HCT116 (cell line): ENCODE measurements at regions of chr19 and their contacts with region 1.

Region 1: GRCh38 chr19:8355631-8356402 is 8.1 kb upstream of the ANGPTL4 start:
- DNase-seq: peak; percentile 70
- ATAC-seq: peak; percentile 73
- H3K4me3 ChIP-seq: peak overlapping the region in 1 of 2 experiments; percentile 6; a peak in 2 of 4 replicates
- H3K27ac ChIP-seq: peak overlapping the region; percentile 34
- H3K4me1 ChIP-seq: peaks cover 32 to 62% of the 10 kb centered on the region in 2 experiments
- H3K27me3 ChIP-seq: no peaks in the 10 kb centered on the region
- CTCF ChIP-seq: no peak
- POLR2A ChIP-seq: no peak
- RAD21 ChIP-seq: peak; percentile 54

Region 2: GRCh38 chr19:8342684-8343482 is 12.9 kb before region 1 on chr19 and contains the start of gene KANK3:
- CTCF ChIA-PET with region 1: interaction called, 14 read pairs
- POLR2A ChIA-PET with region 1: interaction called, 6 read pairs
- RAD21 ChIA-PET with region 1: no interaction called
- intact Hi-C with region 1: no loop called
- DNase-seq: peak; percentile 97
- ATAC-seq: peak; percentile 100
- H3K4me3 ChIP-seq: peak within 1 kb of the TSS; percentile 59 to 63
- H3K27ac ChIP-seq: peak within 1 kb of the TSS; percentile 68; the same call in 1 of the 2 replicates
- H3K4me1 ChIP-seq: peaks cover 15 to 20% of the 10 kb centered on the region in 2 experiments
- H3K27me3 ChIP-seq: no peaks in the 10 kb centered on the region
- CTCF ChIP-seq: no peak
- POLR2A ChIP-seq: no peak
- RAD21 ChIP-seq: no peak
- total RNA-seq, gene KANK3: 21.7 TPM

Region 3: GRCh38 chr19:8412783-8413628 is 57.2 kb after region 1 on chr19 and contains the start of gene MARCHF2:
- CTCF ChIA-PET with region 1: interaction called, 3 read pairs
- POLR2A ChIA-PET with region 1: no interaction called
- RAD21 ChIA-PET with region 1: interaction called in 1 of 2 experiments, 5 read pairs
- intact Hi-C with region 1: loop called (anchors 5 kb)
- DNase-seq: peak; percentile 90
- ATAC-seq: peak; percentile 99
- H3K4me3 ChIP-seq: peak within 1 kb of the TSS; percentile 66 to 67
- H3K27ac ChIP-seq: peak within 1 kb of the TSS; percentile 57
- H3K4me1 ChIP-seq: peaks cover 23 to 24% of the 10 kb centered on the region in 2 experiments
- H3K27me3 ChIP-seq: no peaks in the 10 kb centered on the region
- CTCF ChIP-seq: peak; percentile 45 to 63 (median 48); a peak in 5 of 6 replicates
- POLR2A ChIP-seq: no peak
- RAD21 ChIP-seq: peak; percentile 62
- total RNA-seq, gene MARCHF2: 22.5 TPM

Region 4: DNA sequence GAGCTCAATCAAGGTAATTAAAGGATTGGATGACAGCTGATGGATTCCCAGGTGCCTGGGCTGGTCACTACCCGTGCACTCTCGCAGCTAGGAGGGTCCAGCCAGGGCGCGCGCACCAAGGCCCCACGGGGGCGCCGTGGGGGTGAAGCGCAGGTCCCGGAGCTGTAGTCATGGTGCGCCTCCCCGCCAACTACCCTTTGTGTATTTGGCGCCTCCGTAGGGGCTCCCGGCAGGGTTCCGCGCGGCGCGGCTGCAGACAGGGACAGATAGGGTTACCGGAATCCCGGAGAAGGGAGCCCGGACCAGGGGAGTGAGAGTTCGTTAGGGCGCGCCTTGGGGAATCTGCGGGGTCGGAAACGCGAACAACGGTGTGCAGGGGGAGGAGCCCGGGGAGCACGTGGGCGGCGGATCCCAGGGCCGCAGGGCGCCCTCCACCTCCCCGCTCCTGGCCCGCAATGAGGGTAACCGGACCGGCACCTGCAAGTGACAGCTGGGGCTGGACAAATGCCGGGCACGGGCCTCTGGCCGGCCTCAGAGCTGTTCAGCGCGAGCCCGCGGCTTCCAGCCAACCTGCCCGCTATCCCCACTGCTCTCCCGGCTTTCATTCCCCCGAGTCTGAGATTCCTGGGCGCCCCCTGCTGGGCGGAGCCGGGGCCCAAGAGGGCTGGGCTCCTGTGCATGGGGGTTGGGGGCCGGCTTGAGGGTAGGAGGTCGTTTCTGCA is 150.0 kb after region 1 on chr19:
- CTCF ChIA-PET with region 1: interaction called, 14 read pairs
- POLR2A ChIA-PET with region 1: no interaction called
- RAD21 ChIA-PET with region 1: no interaction called
- intact Hi-C with region 1: loop called (anchors 2 kb)
- DNase-seq: no peak
- ATAC-seq: peak; percentile 89
- H3K4me3 ChIP-seq: peak overlapping the region; percentile 36 to 57
- H3K27ac ChIP-seq: peak overlapping the region; percentile 77
- H3K4me1 ChIP-seq: peaks cover 18 to 21% of the 10 kb centered on the region in 2 experiments
- H3K27me3 ChIP-seq: no peaks in the 10 kb centered on the region
- CTCF ChIP-seq: peak; percentile 77 to 87 (median 84)
- POLR2A ChIP-seq: peak; percentile 46
- RAD21 ChIP-seq: peak; percentile 80